Mammary epithelial cell (primary cell): ENCODE measurements at regions of chr7 and their contacts with region 1.

Region 1: DNA sequence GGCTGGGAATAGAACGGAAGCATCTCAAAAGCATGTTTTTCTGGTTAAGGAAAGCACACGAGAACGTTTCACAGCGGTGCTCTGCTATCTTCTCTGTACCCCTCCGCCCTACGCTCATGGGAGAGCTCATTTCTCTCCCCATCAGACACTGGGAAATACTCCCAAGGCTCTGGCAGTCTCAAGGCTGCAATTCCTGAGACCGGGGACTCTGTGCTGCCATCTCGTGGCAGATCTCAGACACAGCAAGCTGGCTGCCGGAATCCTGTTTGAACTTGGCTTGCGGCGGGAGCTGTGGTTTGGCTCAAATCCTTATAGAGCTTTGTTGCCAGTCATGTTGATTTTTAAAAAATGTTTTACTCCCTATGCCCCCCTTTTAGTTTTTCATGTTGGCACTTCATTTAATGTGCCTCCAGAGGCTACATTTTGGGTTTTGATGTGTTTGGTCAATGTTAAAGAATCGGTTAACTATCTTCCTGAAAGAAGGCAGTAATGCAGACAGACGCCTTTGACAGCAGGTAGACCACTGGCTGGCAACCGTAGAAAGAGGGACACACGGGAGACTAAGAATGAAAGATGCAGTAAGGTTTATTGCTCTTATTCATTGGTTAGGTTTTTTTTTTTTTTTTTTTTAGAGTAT is 27.6 kb downstream of the BMPER start:
- DNase-seq: peak; percentile 82
- H3K4me3 ChIP-seq: peak overlapping the region in 1 of 3 experiments; percentile 7
- H3K27ac ChIP-seq: peak overlapping the region; percentile 4
- H3K4me1 ChIP-seq: peaks cover 19% of the 10 kb centered on the region
- H3K27me3 ChIP-seq: no peaks in the 10 kb centered on the region
- CTCF ChIP-seq: peak; percentile 97 to 99

Region 2: DNA sequence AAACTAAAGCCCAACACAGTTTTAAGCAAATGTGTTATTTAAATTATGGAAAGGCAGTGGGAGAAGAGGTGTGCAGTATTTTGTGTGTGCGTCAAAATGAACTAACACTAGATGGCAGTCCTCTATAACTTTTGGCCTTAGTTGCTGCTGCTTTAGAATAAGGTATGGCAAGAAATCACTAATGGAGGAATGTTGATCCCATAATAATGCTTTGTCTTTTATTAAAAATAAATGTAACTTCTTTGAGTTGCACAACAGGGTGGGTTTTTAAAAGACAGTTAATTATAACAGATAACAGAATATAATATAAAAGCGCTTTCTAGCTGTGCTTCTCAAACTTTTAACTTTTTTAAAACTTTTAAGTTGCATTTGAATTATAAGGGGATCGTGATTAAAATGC is 747.2 kb before region 1 on chr7:
- CTCF ChIA-PET with region 1: no interaction called
- dilution Hi-C with region 1: no loop called
- in situ Hi-C with region 1: no loop called
- intact Hi-C with region 1: loop called (anchors 1 kb)
- DNase-seq: peak; percentile 44
- H3K4me3 ChIP-seq: no peak overlapping the region
- H3K27ac ChIP-seq: no peak overlapping the region
- H3K4me1 ChIP-seq: no peaks in the 10 kb centered on the region
- H3K27me3 ChIP-seq: no peaks in the 10 kb centered on the region
- CTCF ChIP-seq: peak; percentile 72 to 74

Region 3: DNA sequence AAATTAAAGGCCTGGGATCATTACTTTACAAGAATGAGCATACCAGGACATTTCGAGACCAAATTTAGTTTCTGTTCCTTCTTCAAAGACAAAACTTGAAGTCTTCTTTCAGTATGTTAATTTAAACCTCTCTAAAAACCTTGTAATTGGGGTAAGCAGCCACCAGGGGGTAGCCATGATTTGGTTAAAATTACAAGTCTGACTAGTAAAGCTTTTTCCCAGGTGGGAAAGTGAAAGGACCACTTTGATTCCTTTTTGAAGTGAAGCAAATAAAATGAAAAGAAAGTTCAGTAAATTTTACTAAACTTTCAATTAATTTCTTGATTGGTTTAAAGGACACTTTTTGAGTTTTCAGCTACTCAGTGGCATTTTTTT is 509.3 kb before region 1 on chr7:
- CTCF ChIA-PET with region 1: no interaction called
- dilution Hi-C with region 1: no loop called
- in situ Hi-C with region 1: no loop called
- intact Hi-C with region 1: loop called (anchors 10 kb)
- DNase-seq: no peak
- H3K4me3 ChIP-seq: no peak overlapping the region
- H3K27ac ChIP-seq: no peak overlapping the region
- H3K4me1 ChIP-seq: no peaks in the 10 kb centered on the region
- H3K27me3 ChIP-seq: no peaks in the 10 kb centered on the region
- CTCF ChIP-seq: peak; percentile 30 to 53

Region 4: DNA sequence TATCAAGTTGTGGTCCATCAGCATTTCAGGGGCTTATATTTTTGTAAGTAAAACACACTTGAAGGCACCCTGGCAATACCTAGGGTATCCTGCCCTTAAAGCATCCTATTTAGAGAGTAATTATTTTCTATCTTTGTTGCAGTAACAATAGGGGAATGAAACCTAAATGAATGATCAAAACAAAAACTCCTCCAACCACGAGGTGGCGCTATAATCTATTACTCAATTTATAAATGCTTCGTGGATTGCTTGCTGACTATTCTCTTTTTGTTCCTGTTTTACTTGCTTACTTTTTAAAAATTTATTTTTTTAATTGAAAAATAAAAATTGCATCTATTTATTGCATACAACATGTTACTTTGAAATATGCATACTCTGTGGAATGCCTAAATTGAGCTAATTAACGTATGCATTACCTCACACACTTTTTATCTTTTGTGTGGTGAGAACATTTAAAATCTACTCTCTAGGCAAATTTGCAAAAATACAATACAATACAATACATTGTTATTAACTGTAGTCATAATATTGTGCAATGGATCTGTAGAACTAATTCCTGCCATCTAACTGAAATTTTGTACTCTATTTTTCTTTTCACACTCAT is 175.3 kb before region 1 on chr7:
- CTCF ChIA-PET with region 1: interaction called, 5 read pairs
- dilution Hi-C with region 1: no loop called
- in situ Hi-C with region 1: loop called (anchors 5 to 10 kb)
- intact Hi-C with region 1: loop called (anchors 1 kb)
- DNase-seq: peak; percentile 10
- H3K4me3 ChIP-seq: no peak overlapping the region
- H3K27ac ChIP-seq: no peak overlapping the region
- H3K4me1 ChIP-seq: no peaks in the 10 kb centered on the region
- H3K27me3 ChIP-seq: no peaks in the 10 kb centered on the region
- CTCF ChIP-seq: peak; percentile 57 to 58

Region 5: DNA sequence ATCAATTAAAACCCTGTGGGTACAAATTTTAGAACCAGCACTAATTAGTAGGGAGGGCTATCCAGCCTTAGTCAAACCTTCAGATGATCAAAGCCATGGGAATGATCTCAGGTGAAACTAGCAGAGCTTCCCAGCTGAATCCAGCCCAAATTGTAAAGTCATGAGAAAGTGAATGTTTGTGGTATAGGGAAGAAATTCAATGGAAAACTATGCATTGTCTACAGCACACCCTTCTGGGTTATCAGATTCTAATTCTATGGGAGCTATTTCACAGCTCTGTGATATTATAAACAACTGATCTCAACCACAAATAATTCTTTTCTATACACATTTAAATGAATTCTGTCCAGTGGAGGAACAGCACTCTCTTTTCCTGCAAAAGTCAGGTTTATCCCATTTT is 52.2 kb before region 1 on chr7:
- CTCF ChIA-PET with region 1: interaction called, 17 read pairs
- dilution Hi-C with region 1: no loop called
- in situ Hi-C with region 1: no loop called
- intact Hi-C with region 1: no loop called
- DNase-seq: peak; percentile 89
- H3K4me3 ChIP-seq: no peak overlapping the region
- H3K27ac ChIP-seq: peak overlapping the region; percentile 73
- H3K4me1 ChIP-seq: peaks cover 38% of the 10 kb centered on the region
- H3K27me3 ChIP-seq: no peaks in the 10 kb centered on the region
- CTCF ChIP-seq: no peak

Region 6: DNA sequence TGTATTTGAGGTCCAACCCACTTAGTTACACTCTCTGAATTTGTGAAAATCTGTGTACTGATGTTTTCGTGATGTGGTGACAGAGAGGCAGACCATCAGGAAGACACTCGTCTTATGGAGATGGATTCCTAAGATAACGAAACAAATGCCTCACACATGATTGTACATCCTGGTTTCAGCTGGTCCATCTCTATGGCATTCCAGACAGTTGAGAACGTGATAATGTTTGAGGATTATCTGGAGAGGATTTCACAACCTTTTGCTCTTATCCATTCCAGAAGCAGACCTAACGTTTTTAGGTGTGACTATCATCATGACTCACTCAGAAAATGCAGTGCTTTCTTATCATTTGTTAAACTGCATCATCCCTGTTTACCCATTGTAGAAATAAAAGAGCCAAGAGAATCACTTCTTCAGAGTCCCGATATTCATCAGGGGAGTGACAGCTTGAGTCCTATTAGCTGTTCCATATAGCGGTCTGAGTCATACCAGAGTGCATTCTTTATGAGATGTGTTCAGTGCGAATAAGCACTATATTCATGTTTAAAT is 46.9 kb after region 1 on chr7:
- CTCF ChIA-PET with region 1: interaction called, 3 read pairs
- dilution Hi-C with region 1: no loop called
- in situ Hi-C with region 1: no loop called
- intact Hi-C with region 1: loop called (anchors 1 kb)
- DNase-seq: peak; percentile 56
- H3K4me3 ChIP-seq: no peak overlapping the region
- H3K27ac ChIP-seq: no peak overlapping the region
- H3K4me1 ChIP-seq: peaks cover 37% of the 10 kb centered on the region
- H3K27me3 ChIP-seq: no peaks in the 10 kb centered on the region
- CTCF ChIP-seq: no peak

Region 7: GRCh38 chr7:34117573-34117972 is 184.6 kb after region 1 on chr7:
- CTCF ChIA-PET with region 1: no interaction called
- dilution Hi-C with region 1: no loop called
- in situ Hi-C with region 1: no loop called
- intact Hi-C with region 1: no loop called
- DNase-seq: no peak
- H3K4me3 ChIP-seq: no peak overlapping the region
- H3K27ac ChIP-seq: no peak overlapping the region
- H3K4me1 ChIP-seq: no peaks in the 10 kb centered on the region
- H3K27me3 ChIP-seq: no peaks in the 10 kb centered on the region
- CTCF ChIP-seq: no peak